ENCODE measurements at regions of chr19 and their contacts with region 1.

Region 1: DNA sequence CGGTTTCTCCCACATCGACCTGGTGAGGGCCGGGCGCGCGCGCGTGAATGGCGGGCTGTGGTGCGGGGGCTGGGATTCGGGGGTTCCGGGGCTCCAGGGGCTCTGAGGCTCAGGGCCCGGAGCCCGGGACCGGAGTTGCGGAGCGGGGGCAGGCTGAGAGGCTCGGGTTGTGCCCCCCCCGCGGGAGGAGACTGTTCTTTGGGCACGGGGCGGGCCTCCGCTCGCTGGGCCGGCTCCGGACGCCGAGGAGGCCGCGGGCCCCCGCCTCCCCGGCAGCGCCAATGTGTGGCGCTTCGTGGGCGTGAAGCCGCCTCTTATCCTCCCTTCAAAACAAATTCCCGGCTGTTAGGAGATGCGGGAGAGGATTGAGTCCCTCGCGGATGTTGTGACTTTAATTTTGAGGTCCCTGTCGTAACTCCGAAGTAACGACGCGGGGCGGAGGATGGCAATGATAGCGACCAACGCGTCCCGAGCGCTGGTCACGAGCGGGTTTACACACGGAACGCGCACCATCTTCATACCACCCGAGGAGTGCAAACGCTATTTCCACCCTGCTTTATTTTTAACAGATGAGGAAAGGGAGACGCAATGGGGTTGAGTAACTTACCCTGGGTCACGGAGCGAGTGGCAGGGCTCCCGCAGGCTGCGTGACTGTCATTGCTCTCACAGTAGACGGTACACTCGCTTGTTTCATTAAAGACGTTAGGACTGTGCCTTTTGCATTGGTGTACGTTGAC is 536 bp downstream of the UBA2 start:
- DNase-seq: peak; percentile 2
- ATAC-seq: peak; percentile 66
- H3K4me3 ChIP-seq: peak overlapping the region; percentile 87 to 90 (median 89)
- H3K27ac ChIP-seq: peak overlapping the region; percentile 73
- H3K4me1 ChIP-seq: peaks cover 41% of the 10 kb centered on the region
- H3K27me3 ChIP-seq: no peaks in the 10 kb centered on the region; a peak in 1 of 5 replicates
- CTCF ChIP-seq: no peak
- EP300 ChIP-seq: no peak
- POLR2A ChIP-seq: no peak
- RAD21 ChIP-seq: no peak

Region 2: DNA sequence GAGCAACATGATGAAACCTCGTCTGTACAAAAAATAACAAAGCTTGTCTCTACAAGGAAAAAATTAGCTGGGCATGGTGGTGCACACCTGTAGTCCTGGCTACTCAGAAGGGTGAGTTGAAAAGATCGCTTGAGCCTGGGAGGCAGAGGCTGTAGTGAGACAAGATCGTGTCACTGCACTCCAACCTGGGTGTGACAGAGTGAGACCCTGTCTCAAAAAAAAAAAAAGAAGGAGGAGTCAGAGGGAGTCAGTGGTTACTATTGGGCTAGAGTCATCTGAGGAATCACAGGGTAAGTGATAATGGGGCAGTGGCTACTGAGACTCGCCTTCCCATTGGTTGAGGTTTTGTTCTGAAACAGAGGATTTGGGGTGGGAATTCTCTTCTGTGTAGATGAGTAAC is 65.6 kb before region 1 on chr19:
- CTCF ChIA-PET with region 1: no interaction called
- POLR2A ChIA-PET with region 1: interaction called, 4 read pairs
- in situ Hi-C with region 1: no loop called
- intact Hi-C with region 1: loop called (anchors 2 kb)
- DNase-seq: peak; percentile 81
- ATAC-seq: peak; percentile 48
- H3K4me3 ChIP-seq: peak overlapping the region; percentile 21 to 58 (median 34); a peak in 5 of 6 replicates
- H3K27ac ChIP-seq: peak overlapping the region; percentile 68
- H3K4me1 ChIP-seq: peaks cover 84% of the 10 kb centered on the region
- H3K27me3 ChIP-seq: no peaks in the 10 kb centered on the region
- CTCF ChIP-seq: no peak
- EP300 ChIP-seq: no peak
- POLR2A ChIP-seq: peak in 1 of 2 experiments; percentile 65; a peak in 1 of 4 replicates
- RAD21 ChIP-seq: no peak

Region 3: DNA sequence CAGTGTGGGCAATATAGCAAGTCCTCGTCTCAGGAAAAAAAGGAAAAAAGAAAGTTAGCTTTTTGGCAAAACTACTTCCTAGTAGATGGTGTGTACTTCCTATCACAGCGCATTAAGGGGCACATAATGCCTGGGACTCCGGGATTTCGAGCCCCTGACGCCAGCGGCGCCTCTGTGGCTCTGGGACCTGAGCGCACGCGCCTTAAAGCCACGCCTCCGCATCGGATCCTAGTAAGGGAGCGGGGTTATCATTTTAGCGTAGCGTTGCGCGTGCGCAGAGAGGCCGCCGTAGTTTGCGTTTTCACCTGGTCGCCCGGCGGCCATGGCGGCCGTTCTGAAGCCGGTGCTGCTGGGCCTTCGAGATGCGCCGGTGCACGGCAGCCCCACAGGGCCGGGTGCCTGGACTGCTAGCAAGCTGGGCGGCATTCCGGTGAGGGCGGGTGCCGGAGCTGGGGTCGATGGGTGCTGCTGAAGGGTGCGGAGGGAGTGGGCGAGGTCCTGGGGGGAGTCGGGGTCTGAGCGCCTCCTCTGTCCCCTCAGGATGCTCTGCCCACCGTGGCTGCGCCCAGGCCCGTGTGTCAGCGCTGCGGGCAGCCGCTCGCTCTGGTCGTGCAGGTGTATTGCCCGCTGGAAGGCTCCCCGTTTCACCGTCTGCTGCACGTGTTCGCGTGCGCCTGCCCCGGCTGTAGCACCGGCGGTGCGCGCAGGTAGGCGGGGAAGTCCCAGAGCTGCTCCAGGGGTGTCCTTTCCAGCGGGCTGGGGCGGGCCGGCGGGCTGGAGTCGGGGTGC is 24.4 kb before region 1 on chr19 and contains the start of gene PDCD2L:
- CTCF ChIA-PET with region 1: no interaction called
- POLR2A ChIA-PET with region 1: no interaction called
- in situ Hi-C with region 1: no loop called
- intact Hi-C with region 1: loop called (anchors 2 kb)
- DNase-seq: peak; percentile 89
- ATAC-seq: peak; percentile 92
- H3K4me3 ChIP-seq: peak within 1 kb of the TSS; percentile 59 to 95 (median 75)
- H3K27ac ChIP-seq: peak within 1 kb of the TSS; percentile 60
- H3K4me1 ChIP-seq: peaks cover 33% of the 10 kb centered on the region
- H3K27me3 ChIP-seq: no peaks in the 10 kb centered on the region
- CTCF ChIP-seq: 0 out of 2 replicates have a peak, but pooled peaks have one; percentile 4
- EP300 ChIP-seq: no peak
- POLR2A ChIP-seq: peak; percentile 79 to 84
- RAD21 ChIP-seq: no peak; the same call in 1 of the 2 replicates
- total RNA-seq, gene PDCD2L: 35.2 and 40.5 TPM in 2 replicates

Region 4: GRCh38 chr19:34474233-34474989 is 45.7 kb after region 1 on chr19:
- CTCF ChIA-PET with region 1: no interaction called
- POLR2A ChIA-PET with region 1: no interaction called
- in situ Hi-C with region 1: no loop called
- intact Hi-C with region 1: no loop called
- DNase-seq: no peak
- ATAC-seq: no peak
- H3K4me3 ChIP-seq: no peak overlapping the region
- H3K27ac ChIP-seq: no peak overlapping the region
- H3K4me1 ChIP-seq: peaks cover 11% of the 10 kb centered on the region
- H3K27me3 ChIP-seq: no peaks in the 10 kb centered on the region
- CTCF ChIP-seq: no peak
- EP300 ChIP-seq: no peak
- POLR2A ChIP-seq: no peak
- RAD21 ChIP-seq: no peak

Region 5: GRCh38 chr19:34618410-34618809 is 189.7 kb after region 1 on chr19:
- CTCF ChIA-PET with region 1: no interaction called
- POLR2A ChIA-PET with region 1: no interaction called
- in situ Hi-C with region 1: no loop called
- intact Hi-C with region 1: no loop called
- DNase-seq: no peak
- ATAC-seq: no peak
- H3K4me3 ChIP-seq: no peak overlapping the region
- H3K27ac ChIP-seq: no peak overlapping the region
- H3K4me1 ChIP-seq: no peaks in the 10 kb centered on the region
- H3K27me3 ChIP-seq: peaks cover 0 to under 1% of the 10 kb centered on the region in 2 experiments; a peak in 1 of 5 replicates
- CTCF ChIP-seq: no peak
- EP300 ChIP-seq: no peak
- POLR2A ChIP-seq: no peak
- RAD21 ChIP-seq: no peak

Measured in HepG2 (cell line).